ENCODE measurements at regions of chr1 and their contacts with region 1.

Region 1: GRCh38 chr1:115764541-115764940 is 4.0 kb downstream of the CASQ2 start:
- DNase-seq: peak; percentile 43 to 70
- H3K4me3 ChIP-seq: no peak overlapping the region
- H3K27ac ChIP-seq: no peak overlapping the region
- H3K4me1 ChIP-seq: peaks cover 19% of the 10 kb centered on the region
- H3K27me3 ChIP-seq: no peaks in the 10 kb centered on the region
- CTCF ChIP-seq: peak; percentile 85

Region 2: DNA sequence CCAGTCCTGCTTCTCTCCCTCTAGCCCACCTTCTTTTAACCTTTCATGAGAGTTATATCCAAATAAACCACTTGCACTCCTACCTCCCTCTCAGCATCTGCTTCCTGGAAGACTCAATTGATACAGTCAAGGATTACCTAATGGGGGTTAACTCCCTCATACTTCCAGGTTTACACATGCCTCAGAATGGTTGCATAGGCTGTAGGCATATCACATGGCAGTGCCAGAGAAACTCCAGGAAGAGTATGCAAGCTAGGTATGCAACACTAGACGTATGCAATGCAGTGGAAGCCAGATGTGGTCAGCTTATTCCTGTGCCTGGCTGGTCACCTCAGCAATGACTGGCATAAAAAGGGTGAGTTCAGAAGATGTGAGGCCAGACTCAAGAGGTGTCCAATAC is 155.5 kb before region 1 on chr1:
- CTCF ChIA-PET with region 1: interaction called, 13 read pairs
- POLR2A ChIA-PET with region 1: no interaction called
- intact Hi-C with region 1: loop called (anchors 1 kb)
- DNase-seq: peak in 1 of 2 experiments; percentile 73
- H3K4me3 ChIP-seq: no peak overlapping the region
- H3K27ac ChIP-seq: no peak overlapping the region
- H3K4me1 ChIP-seq: peaks cover 17% of the 10 kb centered on the region
- H3K27me3 ChIP-seq: no peaks in the 10 kb centered on the region
- CTCF ChIP-seq: no peak

Region 3: GRCh38 chr1:115642168-115643072 is 122.1 kb before region 1 on chr1:
- CTCF ChIA-PET with region 1: interaction called, 6 read pairs
- POLR2A ChIA-PET with region 1: no interaction called
- intact Hi-C with region 1: loop called (anchors 2 kb)
- DNase-seq: peak; percentile 64 to 76
- H3K4me3 ChIP-seq: peak overlapping the region; percentile 62
- H3K27ac ChIP-seq: peak overlapping the region; percentile 38
- H3K4me1 ChIP-seq: peaks cover 36% of the 10 kb centered on the region
- H3K27me3 ChIP-seq: no peaks in the 10 kb centered on the region
- CTCF ChIP-seq: peak; percentile 44; the same call in 1 of the 2 replicates